GM18951 (cell line): ENCODE measurements at regions of chr2 and their contacts with region 1.

Region 1: GRCh38 chr2:210195101-210195852 is 24.1 kb upstream of the KANSL1L start:
- POLR2A ChIP-seq: no peak

Region 2: GRCh38 chr2:209977386-209978239 is 217.7 kb before region 1 on chr2:
- in situ Hi-C with region 1: loop called (anchors 5 kb)
- POLR2A ChIP-seq: no peak

Region 3: DNA sequence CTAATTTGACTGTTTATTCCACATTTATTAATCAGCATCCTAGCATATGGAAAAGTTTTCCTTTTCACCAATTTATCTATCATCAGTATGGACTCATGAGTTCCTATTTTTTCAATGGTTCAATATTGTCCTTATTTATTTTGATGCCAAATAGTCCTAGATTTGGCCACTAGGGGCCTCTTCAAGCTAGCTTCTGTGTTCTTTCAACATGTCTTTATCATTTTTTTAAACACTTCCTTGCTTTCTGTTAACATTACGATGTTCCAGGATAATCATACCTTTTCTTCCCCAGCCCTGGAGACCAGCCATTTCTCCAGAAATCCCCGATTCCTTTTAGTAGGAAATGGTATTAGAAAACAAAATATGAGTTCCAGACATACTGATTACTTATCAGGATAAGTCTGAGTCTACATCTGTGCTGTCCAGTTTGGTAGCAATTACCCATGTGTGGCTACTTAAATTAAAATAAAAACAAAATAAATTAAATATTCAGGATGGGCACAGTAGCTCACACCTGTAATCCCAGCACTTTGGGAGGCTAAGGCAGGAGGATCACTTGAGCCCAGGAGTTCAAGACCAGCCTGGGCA is 122.3 kb before region 1 on chr2:
- in situ Hi-C with region 1: loop called (anchors 10 kb)
- POLR2A ChIP-seq: no peak